PC-9 (cell line): ENCODE measurements at regions of chr9 and their contacts with region 1.

Region 1: DNA sequence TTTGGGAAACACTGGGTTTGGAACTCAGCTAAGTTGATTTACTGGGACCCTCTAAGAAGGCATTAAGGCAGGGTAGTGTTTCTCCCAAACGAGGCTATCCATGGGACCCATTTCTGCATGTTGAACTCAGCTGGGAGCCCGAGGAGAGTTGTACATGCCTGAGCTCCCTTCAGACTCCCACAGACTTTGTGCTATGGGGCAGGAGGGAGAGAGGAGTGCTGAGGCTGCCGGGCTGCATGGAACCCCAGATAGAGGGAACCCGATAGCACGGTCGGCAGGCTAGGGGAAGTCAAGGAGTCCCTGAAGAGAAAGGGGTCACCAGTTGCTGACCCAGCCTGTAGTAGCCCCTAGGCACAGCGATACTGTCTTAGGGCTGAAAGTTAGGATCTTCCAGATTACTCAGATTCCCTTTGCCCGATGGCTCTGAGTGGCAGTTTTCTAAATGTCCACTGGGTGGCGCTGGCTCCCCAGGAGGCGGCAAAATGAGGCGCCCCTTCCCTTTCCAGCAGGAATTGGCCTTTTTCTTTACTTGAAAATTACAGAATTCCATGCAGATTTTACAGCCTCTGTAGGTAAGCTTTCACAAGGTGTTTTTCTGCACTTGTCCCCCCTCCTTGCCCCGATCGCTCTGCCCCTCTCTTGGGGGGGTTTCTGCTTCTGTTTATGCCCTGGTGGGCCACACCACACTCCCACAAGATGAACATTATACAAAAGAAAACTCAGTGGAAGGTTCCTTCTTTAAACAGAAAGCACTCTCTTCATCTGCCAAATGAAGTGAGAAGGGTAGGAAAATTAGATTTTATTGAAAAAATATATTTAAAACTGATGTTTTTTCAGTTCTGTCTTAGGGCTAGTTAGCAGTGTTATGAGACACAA is 17.8 kb downstream of the NANS start:
- DNase-seq: peak; percentile 49 to 79
- H3K4me3 ChIP-seq: no peak overlapping the region
- H3K27ac ChIP-seq: peak overlapping the region; percentile 69
- H3K4me1 ChIP-seq: peaks cover 49% of the 10 kb centered on the region
- H3K27me3 ChIP-seq: no peaks in the 10 kb centered on the region
- CTCF ChIP-seq: peak; percentile 96

Region 2: DNA sequence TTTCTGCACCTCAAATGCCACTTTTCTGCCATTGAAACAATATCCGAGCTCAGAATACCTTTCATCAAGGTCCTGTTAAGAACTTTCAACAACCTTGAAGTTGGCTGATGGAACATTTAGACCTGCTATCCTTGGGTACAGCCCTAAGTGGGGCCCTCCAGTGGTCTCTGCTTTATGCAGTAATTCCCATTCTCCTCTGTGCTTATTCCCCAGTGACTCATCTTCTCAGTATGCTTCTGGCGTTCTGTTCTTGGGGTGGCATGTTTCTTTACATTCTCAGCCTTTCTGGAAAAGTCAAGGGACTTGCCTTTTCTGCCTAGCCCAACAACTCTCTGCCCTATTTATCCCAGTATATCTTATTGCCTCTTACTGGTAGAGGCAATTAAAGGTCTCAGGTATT is 84.1 kb before region 1 on chr9:
- CTCF ChIA-PET with region 1: interaction called, 9 read pairs
- POLR2A ChIA-PET with region 1: interaction called, 13 read pairs
- intact Hi-C with region 1: no loop called
- DNase-seq: peak; percentile 27 to 68
- H3K4me3 ChIP-seq: no peak overlapping the region
- H3K27ac ChIP-seq: peak overlapping the region; percentile 42
- H3K4me1 ChIP-seq: peaks cover 54% of the 10 kb centered on the region
- H3K27me3 ChIP-seq: no peaks in the 10 kb centered on the region
- CTCF ChIP-seq: no peak

Region 3: DNA sequence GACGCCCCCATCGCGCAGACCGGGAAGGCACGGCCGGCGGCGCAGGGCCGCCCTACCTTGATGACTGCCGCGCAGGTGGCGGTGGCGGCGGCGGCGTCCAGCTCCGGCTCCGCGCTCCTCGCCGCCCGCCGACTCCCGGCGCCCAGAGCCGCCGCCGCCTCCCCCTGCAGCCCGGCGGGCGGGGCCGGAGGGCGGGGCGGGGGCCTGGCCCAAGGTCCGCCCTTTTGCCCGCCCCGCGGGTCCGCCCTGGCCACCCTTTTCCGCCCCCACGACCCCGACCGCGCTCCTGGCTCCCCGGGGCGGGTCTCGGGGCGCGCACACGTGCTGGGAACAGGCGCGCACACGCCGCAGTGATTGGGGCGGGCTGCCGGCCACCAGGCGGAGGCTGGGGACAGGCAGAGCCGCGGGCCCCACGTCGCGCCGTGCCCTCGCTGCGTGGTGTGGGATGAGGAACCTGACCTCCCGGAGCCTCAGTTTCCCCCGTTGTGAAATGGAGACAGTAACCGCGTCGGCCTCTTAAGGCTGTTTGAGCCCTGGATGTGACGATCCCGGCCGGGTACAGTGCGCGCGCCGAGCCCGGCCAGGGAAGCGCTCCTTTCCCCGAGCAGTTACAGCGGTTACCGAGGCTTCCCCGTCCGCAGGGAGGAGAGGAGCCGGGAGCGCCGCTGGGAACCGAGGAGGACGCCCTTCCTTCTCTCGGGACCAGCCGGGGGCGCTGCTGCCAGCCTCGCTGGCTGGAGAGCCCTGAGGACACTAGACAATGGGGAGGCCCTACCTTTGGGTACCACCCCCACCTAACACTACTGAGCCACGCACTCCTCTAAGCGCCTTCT is 118.4 kb after region 1 on chr9 and contains the start of gene CORO2A:
- CTCF ChIA-PET with region 1: interaction called, 4 read pairs
- POLR2A ChIA-PET with region 1: no interaction called
- intact Hi-C with region 1: loop called (anchors 1 kb)
- DNase-seq: peak; percentile 74 to 93
- H3K4me3 ChIP-seq: peak within 1 kb of the TSS; percentile 63
- H3K27ac ChIP-seq: peak within 1 kb of the TSS; percentile 46
- H3K4me1 ChIP-seq: peaks cover 16% of the 10 kb centered on the region
- H3K27me3 ChIP-seq: no peaks in the 10 kb centered on the region
- CTCF ChIP-seq: peak; percentile 62; the same call in 1 of the 2 replicates
- total RNA-seq, gene CORO2A: 19.5 and 19.8 TPM in 2 replicates

Region 4: GRCh38 chr9:98263482-98264357 is 189.4 kb after region 1 on chr9:
- CTCF ChIA-PET with region 1: interaction called, 10 read pairs
- POLR2A ChIA-PET with region 1: no interaction called
- intact Hi-C with region 1: loop called (anchors 1 kb)
- DNase-seq: peak; percentile 59 to 81
- H3K4me3 ChIP-seq: no peak overlapping the region
- H3K27ac ChIP-seq: no peak overlapping the region
- H3K4me1 ChIP-seq: no peaks in the 10 kb centered on the region
- H3K27me3 ChIP-seq: no peaks in the 10 kb centered on the region
- CTCF ChIP-seq: peak; percentile 89

Region 5: GRCh38 chr9:98796364-98797101 is 722.2 kb after region 1 on chr9 and contains the start of gene ANKS6:
- CTCF ChIA-PET with region 1: no interaction called
- POLR2A ChIA-PET with region 1: no interaction called
- intact Hi-C with region 1: loop called (anchors 10 kb)
- DNase-seq: peak in 1 of 2 experiments; percentile 87
- H3K4me3 ChIP-seq: peak within 1 kb of the TSS; percentile 64
- H3K27ac ChIP-seq: no peak within 1 kb of the TSS
- H3K4me1 ChIP-seq: peaks cover 44% of the 10 kb centered on the region
- H3K27me3 ChIP-seq: no peaks in the 10 kb centered on the region
- CTCF ChIP-seq: peak; percentile 49; the same call in 1 of the 2 replicates
- total RNA-seq, gene ANKS6: 74.7 and 87.7 TPM in 2 replicates